Astrocyte of the cerebellum (primary cell): ENCODE measurements at regions of chr12 and their contacts with region 1.

Region 1: DNA sequence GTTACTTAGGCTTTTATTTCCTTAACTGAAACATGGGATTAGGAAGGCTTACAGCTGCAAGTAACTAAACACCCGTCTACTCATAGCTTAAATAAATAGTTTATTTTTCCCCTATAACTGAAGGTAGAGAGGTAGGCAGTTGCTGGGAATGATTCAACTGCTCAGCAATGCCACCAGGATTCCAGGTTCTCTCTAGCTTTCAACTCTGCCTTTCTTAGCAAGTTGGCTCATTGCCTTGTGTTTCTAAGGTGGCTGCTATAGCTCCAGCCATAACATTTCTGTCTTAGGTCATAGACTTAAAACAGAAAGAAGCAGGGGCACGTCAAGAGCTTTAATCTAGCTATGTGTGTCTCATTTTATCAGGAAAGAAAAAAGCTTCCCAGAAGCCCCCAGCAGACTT is 103.7 kb upstream of the MDM1 start:
- DNase-seq: no peak
- H3K4me3 ChIP-seq: no peak overlapping the region
- CTCF ChIP-seq: no peak

Region 2: DNA sequence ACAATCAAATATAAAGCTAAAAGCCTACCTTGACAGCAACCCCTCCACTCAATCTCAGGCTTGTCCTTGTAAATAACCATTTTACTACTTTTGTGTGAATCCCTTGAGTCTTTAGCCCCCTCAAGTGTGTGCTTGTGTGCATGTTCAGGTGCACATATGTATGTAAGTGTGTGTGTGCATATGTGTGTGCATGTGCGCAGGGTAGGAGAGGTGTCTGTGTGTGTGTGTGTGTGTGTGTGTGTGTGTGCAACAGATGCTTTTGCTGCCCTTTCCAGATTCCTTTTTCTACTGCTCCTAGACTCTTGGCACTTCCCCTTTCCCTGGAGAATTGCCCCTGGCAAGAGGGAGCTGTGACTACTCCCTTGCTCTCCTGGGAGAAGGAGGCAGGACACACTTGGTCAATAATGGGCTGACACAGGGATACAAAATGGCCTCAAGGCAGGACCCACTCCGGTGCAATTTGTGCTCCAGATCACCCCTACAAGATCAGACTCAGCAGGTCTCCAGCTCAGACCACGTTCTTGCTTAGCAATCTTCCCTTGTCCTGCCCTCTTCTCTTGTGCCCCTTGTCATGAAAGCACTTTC is 349.7 kb before region 1 on chr12:
- in situ Hi-C with region 1: no loop called
- DNase-seq: no peak
- H3K4me3 ChIP-seq: no peak overlapping the region
- CTCF ChIP-seq: no peak

Region 3: DNA sequence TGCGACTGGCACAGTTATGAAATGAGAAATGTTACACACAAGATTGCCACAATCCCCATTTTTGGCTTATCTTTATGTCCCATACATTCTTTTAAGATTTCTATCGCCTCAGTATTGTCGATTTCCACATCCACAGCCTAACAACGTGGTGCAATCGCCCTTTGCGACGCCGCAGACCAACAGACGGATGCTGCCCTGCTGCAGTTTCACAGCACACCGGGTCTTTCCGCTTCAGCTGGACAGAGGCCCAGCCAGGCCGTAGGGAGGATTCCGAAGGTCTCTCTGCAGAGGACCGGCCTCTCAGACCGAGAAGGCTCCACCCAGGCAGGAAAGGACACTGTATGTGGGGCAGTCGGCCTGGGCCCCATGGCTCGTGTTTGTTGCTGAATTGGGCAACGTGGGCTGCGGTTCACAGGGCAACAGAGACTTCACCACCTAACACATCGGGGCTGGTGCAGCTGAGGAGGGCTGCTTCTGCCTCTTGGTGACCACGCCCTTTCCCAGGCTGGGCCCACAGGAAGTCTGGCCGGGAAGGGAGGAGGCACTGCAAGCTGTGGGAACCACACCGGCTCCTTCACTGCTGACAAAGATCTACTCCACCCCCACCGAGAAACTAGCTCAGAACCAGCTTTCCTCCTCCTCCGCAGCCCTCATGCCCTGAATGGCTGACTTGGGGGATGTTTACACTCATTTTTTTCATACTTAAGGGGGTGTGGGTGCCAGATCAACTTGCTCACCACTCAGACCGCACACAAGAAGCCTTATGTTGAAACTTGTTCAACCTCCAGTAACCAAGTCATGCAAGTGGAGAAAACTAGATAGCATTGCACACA is 70.7 kb before region 1 on chr12:
- in situ Hi-C with region 1: loop called (anchors 5 kb)
- DNase-seq: peak; percentile 75
- H3K4me3 ChIP-seq: peak overlapping the region; percentile 3
- CTCF ChIP-seq: no peak

Region 4: DNA sequence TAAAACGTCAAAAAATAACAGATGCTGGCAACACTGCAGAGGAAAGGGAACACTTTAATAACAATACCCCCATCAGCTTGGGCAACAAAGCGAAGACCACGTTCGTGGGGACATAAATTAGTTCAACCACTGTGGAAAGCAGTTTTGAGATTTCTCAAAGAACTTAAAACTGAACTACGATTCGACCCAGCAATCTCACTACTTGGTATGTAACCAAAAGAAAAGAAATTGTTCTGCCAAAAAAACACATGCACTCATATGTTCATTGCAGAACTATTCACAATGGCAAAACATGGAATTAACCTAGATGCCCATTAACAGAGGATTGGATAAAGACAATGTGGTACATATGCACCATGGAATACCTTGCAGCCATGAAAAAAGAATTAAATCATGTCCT is 93.7 kb after region 1 on chr12:
- in situ Hi-C with region 1: loop called (anchors 5 kb)
- DNase-seq: peak; percentile 35
- H3K4me3 ChIP-seq: no peak overlapping the region
- CTCF ChIP-seq: no peak